Mammary epithelial cell (primary cell): ENCODE measurements at regions of chr2 and their contacts with region 1.

Region 1: GRCh38 chr2:14756976-14757657 is 124.6 kb downstream of the LRATD1 start:
- DNase-seq: peak; percentile 96
- H3K4me3 ChIP-seq: no peak overlapping the region
- H3K27ac ChIP-seq: peak overlapping the region; percentile 37
- H3K4me1 ChIP-seq: peaks cover 19% of the 10 kb centered on the region
- H3K27me3 ChIP-seq: no peaks in the 10 kb centered on the region
- CTCF ChIP-seq: no peak

Region 2: GRCh38 chr2:14516844-14517243 is 240.3 kb before region 1 on chr2:
- CTCF ChIA-PET with region 1: interaction called, 14 read pairs
- dilution Hi-C with region 1: no loop called
- in situ Hi-C with region 1: no loop called
- intact Hi-C with region 1: no loop called
- DNase-seq: peak; percentile 89
- H3K4me3 ChIP-seq: no peak overlapping the region
- H3K27ac ChIP-seq: peak overlapping the region; percentile 30
- H3K4me1 ChIP-seq: peaks cover 19% of the 10 kb centered on the region
- H3K27me3 ChIP-seq: no peaks in the 10 kb centered on the region
- CTCF ChIP-seq: no peak

Region 3: GRCh38 chr2:14720319-14720718 is 36.8 kb before region 1 on chr2:
- CTCF ChIA-PET with region 1: no interaction called
- dilution Hi-C with region 1: no loop called
- in situ Hi-C with region 1: no loop called
- intact Hi-C with region 1: no loop called
- DNase-seq: peak; percentile 67
- H3K4me3 ChIP-seq: no peak overlapping the region
- H3K27ac ChIP-seq: no peak overlapping the region
- H3K4me1 ChIP-seq: no peaks in the 10 kb centered on the region
- H3K27me3 ChIP-seq: no peaks in the 10 kb centered on the region
- CTCF ChIP-seq: no peak